ENCODE measurements at regions of chr1 and their contacts with region 1.

Region 1: DNA sequence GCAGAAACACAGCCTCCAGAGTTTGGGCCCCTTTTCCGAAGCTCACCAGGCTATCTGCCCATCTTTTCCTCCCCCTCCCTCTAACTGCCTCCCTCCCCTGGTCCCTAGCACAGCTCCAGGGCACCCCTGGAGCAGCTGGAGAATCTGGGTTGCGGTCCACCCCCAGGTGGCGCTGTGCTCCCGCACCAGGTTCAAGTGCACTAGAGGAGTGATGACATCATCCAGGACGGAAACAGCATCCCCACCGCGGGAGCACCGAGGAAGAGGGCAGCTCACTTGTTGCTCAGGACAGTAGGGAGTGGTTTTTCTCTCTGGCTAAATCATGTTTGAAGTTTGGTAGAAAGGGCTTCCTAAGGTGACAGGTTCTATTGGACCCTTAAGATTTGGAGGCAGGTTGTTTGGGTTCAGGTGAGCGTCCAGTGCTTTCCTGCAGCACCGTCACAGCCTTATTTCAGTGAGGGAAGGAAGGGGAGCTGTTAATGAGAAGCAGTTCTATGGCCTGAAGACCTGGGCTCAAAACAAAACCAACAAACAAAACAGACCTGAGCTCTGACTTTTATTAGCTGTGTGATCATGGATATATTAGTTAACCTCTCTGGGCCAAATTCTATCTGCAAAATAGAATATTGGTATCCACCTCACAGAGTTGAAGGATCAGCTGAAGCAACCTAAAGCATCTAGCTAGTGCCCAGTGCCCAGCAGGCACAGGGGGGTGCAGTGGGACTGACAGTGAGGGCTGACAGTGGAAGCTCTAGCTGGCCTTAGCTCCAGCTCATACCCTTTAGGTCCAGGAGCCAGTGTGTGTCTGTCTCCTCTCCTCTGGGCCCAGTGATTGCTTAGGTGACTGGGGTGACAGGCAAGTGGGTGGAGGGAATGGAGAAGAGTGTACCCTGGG is 7.5 kb downstream of the SHISA4 start:
- DNase-seq: peak; percentile 40
- ATAC-seq: peak; percentile 98
- H3K4me3 ChIP-seq: no peak overlapping the region
- H3K27ac ChIP-seq: no peak overlapping the region
- H3K4me1 ChIP-seq: no peaks in the 10 kb centered on the region
- H3K27me3 ChIP-seq: no peaks in the 10 kb centered on the region
- CTCF ChIP-seq: peak; percentile 92 to 95 (median 93)
- EP300 ChIP-seq: no peak
- POLR2A ChIP-seq: no peak
- RAD21 ChIP-seq: peak; percentile 87

Region 2: GRCh38 chr1:201877877-201878401 is 18.2 kb before region 1 on chr1:
- CTCF ChIA-PET with region 1: interaction called, 99 read pairs
- POLR2A ChIA-PET with region 1: no interaction called
- RAD21 ChIA-PET with region 1: interaction called, 3 read pairs
- SMC1A ChIA-PET with region 1: interaction called, 9 read pairs
- in situ Hi-C with region 1: no loop called
- intact Hi-C with region 1: no loop called
- DNase-seq: no peak
- ATAC-seq: peak; percentile 86
- H3K4me3 ChIP-seq: no peak overlapping the region
- H3K27ac ChIP-seq: no peak overlapping the region
- H3K4me1 ChIP-seq: peaks cover 5% of the 10 kb centered on the region; the same call in 1 of the 2 replicates
- H3K27me3 ChIP-seq: no peaks in the 10 kb centered on the region
- CTCF ChIP-seq: peak; percentile 52 to 68 (median 57)
- EP300 ChIP-seq: no peak
- POLR2A ChIP-seq: peak; percentile 36; the same call in 1 of the 2 replicates
- RAD21 ChIP-seq: peak; percentile 52

Region 3: DNA sequence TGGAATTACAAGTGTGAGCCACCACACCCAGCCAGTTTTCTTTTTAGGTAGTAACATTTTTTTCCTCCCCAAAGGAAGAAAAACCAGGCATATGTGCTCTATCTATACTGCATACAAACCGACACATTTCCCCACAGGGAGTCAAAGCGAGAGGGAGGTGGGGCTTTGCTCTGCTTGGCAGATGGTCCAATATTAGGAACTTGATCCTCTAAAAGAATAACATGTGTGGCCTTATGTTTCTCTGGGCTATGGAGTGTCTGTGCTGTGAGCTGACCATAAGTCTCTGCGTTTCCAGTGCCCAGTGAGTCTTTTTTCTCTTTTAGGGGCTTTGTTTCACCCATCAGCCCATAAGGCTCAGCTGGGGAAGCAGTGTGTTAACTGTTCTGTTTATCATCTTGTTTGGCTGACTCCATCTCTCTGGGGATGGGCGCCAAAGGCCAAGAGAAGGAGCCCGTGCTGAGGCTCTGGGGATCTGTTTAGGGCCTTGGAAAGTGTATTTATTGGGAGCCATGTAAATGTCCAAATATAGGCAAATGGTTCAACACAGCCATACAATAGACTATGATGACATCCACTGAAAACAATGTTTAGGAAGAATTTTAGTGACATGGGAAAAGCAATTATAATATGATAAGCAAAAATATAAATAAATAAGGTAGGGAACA is 30.0 kb after region 1 on chr1:
- CTCF ChIA-PET with region 1: interaction called, 11 read pairs
- POLR2A ChIA-PET with region 1: no interaction called
- RAD21 ChIA-PET with region 1: no interaction called
- SMC1A ChIA-PET with region 1: no interaction called
- in situ Hi-C with region 1: no loop called
- intact Hi-C with region 1: no loop called
- DNase-seq: no peak
- ATAC-seq: no peak
- H3K4me3 ChIP-seq: no peak overlapping the region
- H3K27ac ChIP-seq: no peak overlapping the region
- H3K4me1 ChIP-seq: no peaks in the 10 kb centered on the region
- H3K27me3 ChIP-seq: no peaks in the 10 kb centered on the region; a peak in 2 of 4 replicates
- CTCF ChIP-seq: no peak
- EP300 ChIP-seq: no peak
- POLR2A ChIP-seq: no peak
- RAD21 ChIP-seq: no peak

Region 4: GRCh38 chr1:201970334-201971159 is 74.4 kb after region 1 on chr1:
- CTCF ChIA-PET with region 1: interaction called, 233 read pairs
- POLR2A ChIA-PET with region 1: interaction called, 4 read pairs
- RAD21 ChIA-PET with region 1: interaction called, 62 read pairs
- SMC1A ChIA-PET with region 1: interaction called, 68 read pairs
- in situ Hi-C with region 1: loop called (anchors 5 kb)
- intact Hi-C with region 1: loop called (anchors 1 kb)
- DNase-seq: no peak
- ATAC-seq: no peak
- H3K4me3 ChIP-seq: no peak overlapping the region
- H3K27ac ChIP-seq: no peak overlapping the region
- H3K4me1 ChIP-seq: peaks cover 6% of the 10 kb centered on the region
- H3K27me3 ChIP-seq: no peaks in the 10 kb centered on the region
- CTCF ChIP-seq: no peak
- EP300 ChIP-seq: no peak
- POLR2A ChIP-seq: no peak
- RAD21 ChIP-seq: no peak

Region 5: DNA sequence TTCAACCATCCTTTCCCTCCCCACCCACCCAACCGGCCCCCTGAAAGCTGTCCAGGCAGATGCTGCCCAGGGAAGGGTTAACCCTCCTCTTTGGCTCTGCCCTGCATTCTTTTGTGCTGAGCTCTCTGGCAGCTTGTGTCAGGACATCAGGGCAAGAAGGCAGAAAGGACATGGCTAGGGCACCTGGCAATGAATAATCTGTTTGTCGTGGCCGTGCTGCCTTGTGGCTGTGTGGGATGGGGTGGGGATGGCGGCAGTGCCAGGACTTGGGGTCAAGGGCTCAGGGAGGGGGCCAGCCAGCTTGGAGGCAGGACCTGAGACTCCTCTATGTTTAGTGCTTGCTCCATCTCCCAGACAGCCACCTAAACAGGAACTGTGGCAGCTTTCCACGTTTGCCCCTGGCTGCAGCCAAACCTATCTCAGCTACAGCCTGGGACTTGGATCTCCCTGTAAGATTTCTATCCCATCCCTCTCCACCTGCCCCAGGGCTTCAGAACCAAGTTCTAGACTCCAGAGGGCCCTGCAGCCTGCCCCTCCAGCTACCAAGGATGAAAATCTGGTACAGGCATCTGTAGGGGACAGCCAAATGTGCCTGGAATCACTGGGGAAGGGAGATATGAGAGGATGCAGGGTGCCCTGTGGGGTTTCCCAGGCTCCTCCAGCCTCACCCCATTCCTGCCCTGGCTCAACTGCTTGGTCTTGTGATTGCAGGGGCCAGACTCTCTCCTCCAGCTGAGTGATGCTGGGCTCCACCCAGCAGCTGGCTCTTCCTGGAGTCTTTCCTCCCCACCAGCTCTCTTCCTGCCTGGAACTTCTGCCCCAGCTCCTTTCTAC is 216.9 kb after region 1 on chr1:
- CTCF ChIA-PET with region 1: interaction called, 57 read pairs
- POLR2A ChIA-PET with region 1: interaction called, 8 read pairs
- RAD21 ChIA-PET with region 1: interaction called, 12 read pairs
- SMC1A ChIA-PET with region 1: interaction called, 12 read pairs
- in situ Hi-C with region 1: no loop called
- intact Hi-C with region 1: loop called (anchors 2 kb)
- DNase-seq: no peak
- ATAC-seq: peak; percentile 24
- H3K4me3 ChIP-seq: no peak overlapping the region
- H3K27ac ChIP-seq: no peak overlapping the region
- H3K4me1 ChIP-seq: peaks cover 14% of the 10 kb centered on the region
- H3K27me3 ChIP-seq: no peaks in the 10 kb centered on the region
- CTCF ChIP-seq: no peak
- EP300 ChIP-seq: no peak
- POLR2A ChIP-seq: no peak
- RAD21 ChIP-seq: no peak

Measured in GM12878 (cell line).